Activated CD8-positive, alpha-beta T cell treated with anti-CD3 and anti-CD28 coated beads for 36 hours (primary cell): ENCODE measurements at regions of chr19 and their contacts with region 1.

Region 1: DNA sequence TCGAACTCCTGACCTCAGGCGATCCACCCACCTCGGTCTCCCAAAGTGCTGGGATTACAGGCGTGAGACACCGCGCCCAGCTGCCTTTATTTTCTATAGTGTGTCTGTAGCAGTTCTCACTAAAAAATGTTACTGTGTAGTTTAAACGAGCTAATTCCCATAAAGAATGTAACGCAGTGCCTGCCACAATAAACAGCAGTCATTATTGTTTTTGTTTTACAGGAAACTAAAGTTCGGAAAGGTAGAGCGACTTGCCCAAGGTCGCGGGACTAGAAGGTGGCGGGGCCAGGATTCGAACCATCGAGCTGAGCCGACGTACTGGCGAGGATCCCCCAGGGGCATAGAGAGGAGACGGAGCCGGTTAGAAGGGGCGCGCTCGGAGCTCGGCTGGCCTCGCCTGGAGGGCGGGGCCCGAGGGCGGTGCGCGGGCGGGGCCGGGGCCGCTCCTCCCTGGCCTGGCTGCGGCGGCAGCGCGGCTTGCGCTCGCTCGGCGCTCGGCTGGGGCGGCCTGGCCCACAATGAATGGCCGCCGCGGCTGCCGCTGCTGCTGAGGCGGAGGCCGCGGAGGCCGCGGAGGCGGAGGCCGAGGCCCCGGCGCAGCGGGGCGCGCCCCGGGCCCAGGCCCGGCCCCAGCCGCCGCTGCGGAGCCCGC is at the start of gene NACC1:
- DNase-seq: peak; percentile 92
- ATAC-seq: peak; percentile 84
- H3K4me3 Mint-ChIP-seq: peak within 1 kb of the TSS; percentile 86
- H3K27ac Mint-ChIP-seq: peak within 1 kb of the TSS; percentile 95
- H3K4me1 Mint-ChIP-seq: peaks cover 52% of the 10 kb centered on the region
- H3K27me3 Mint-ChIP-seq: no peaks in the 10 kb centered on the region
- CTCF ChIP-seq: no peak
- total RNA-seq, gene NACC1: 73.8 to 87.5 TPM

Region 2: DNA sequence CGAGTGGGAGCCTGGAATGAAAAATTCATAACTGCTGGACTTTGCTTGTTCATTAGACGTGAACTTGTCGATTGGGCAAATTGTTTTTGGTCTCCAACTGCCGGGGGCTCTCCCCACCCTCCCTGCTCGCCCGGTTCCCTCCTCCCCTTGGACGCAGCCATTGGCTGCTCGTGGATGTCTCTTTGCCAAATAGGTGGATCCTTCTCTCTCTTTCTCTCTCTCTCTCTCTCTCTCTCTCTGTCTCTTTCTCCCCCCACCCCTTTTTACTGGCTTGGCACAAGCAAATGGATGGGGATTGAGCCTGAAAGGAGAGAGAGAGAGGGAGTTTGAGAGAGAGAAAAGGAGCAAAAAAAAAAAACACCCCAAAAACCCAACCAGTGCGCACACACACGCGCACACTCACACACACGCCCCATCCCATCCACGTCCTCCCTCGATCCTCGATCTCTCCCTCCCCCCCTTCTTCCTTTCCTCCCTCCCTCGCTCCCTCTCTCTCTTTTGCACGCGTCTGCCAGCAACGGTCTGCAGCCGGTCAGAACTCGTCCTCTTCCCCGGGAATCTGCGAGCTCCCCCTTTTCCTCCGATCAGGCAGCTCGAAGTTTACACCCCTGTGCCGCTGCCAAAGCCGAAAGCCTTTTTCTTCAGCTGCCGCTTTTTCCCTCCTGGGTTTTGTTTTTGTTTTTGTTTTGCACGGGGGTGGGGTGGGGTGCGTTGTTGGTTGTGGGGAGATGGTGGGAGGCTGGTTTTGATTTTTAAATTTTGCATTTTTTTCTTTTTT is 94.8 kb before region 1 on chr19:
- CTCF ChIA-PET with region 1: no interaction called
- POLR2A ChIA-PET with region 1: no interaction called
- intact Hi-C with region 1: no loop called
- DNase-seq: peak; percentile 29
- ATAC-seq: peak; percentile 63
- H3K4me3 Mint-ChIP-seq: peak overlapping the region; percentile 64
- H3K27ac Mint-ChIP-seq: peak overlapping the region; percentile 12
- H3K4me1 Mint-ChIP-seq: peaks cover 18% of the 10 kb centered on the region
- H3K27me3 Mint-ChIP-seq: peaks cover 21% of the 10 kb centered on the region
- CTCF ChIP-seq: no peak

Region 3: DNA sequence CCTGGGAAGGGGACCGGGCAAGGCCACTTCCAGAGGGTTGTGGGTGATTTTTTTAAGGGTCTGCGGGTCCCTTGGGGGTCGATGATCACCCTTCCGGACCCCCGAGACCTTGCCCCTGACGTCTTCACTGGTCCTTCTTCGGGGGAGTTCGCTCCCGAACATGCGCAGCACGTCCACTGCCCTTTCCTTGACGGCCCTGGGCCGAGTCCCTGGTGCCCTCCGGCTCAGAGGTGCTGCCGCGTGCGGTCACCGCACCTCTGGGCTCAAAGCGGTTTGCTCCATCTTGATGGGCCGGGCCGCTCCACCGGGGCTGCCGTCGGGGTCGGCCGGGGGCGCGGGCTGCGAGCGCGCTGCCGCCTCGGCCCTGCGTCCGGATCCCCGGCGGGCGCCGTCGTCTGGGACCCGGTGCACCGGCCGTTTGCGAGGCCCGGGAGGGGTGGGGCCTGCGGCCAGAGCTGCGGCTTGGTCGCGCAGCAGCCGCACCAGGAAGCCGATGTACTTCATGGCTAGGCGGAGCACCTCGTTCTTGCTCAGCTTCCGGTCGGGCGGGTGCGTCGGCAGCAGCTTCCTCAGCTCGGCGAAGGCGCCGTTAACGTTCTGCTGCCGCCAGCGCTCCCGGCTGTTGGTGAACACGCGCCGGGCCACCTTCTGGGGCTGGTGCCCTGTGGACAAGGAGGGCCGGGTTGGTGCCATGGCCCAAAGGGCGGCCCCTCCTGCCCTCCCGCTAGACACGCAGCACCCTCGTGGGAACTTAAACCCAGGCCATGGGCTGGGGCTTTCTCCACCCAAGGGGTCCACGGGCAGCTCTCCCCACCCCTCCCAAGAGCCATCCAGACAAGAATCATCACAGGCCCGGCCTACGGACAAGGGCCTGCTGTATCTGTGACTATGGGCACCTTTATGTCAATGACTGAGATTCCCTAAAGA is 18.6 kb before region 1 on chr19:
- CTCF ChIA-PET with region 1: interaction called, 39 read pairs
- POLR2A ChIA-PET with region 1: interaction called, 46 read pairs
- intact Hi-C with region 1: no loop called
- DNase-seq: peak; percentile 86
- ATAC-seq: peak; percentile 50
- H3K4me3 Mint-ChIP-seq: peak overlapping the region; percentile 61
- H3K27ac Mint-ChIP-seq: peak overlapping the region; percentile 88
- H3K4me1 Mint-ChIP-seq: peaks cover 53% of the 10 kb centered on the region
- H3K27me3 Mint-ChIP-seq: peaks cover 30% of the 10 kb centered on the region
- CTCF ChIP-seq: no peak

Region 4: DNA sequence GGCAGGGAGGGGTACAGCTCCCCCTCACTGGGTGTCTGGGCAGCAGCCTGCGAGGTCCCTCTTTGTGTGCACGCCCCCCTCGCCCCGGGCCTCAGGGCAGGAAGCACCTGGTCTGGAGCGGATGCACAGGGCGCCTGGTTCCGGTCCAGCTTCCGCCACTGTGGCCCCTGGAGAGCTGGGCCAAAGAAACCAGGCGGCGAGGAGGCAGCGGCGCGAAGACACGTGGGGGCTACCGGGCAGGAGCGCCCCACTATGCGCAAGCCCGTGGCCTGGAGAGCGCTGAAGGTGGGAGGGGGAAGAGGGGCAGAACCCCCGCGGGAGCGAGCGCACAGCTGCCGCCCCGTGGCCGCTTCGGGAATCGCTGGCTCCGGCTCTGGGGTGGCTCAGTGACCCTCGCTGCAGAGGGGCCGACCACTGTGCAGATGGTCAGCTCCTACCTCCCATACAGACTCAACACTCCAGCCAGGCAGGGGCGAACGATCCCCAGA is 13.5 kb before region 1 on chr19:
- CTCF ChIA-PET with region 1: interaction called, 39 read pairs
- POLR2A ChIA-PET with region 1: interaction called, 46 read pairs
- intact Hi-C with region 1: no loop called
- DNase-seq: peak; percentile 74
- ATAC-seq: peak; percentile 63
- H3K4me3 Mint-ChIP-seq: peak overlapping the region; percentile 80
- H3K27ac Mint-ChIP-seq: peak overlapping the region; percentile 86
- H3K4me1 Mint-ChIP-seq: peaks cover 28% of the 10 kb centered on the region
- H3K27me3 Mint-ChIP-seq: no peaks in the 10 kb centered on the region
- CTCF ChIP-seq: peak; percentile 98

Region 5: GRCh38 chr19:13132471-13133180 is 14.7 kb after region 1 on chr19:
- CTCF ChIA-PET with region 1: no interaction called
- POLR2A ChIA-PET with region 1: interaction called, 63 read pairs
- intact Hi-C with region 1: no loop called
- DNase-seq: peak; percentile 79
- ATAC-seq: peak; percentile 96
- H3K4me3 Mint-ChIP-seq: peak overlapping the region; percentile 14
- H3K27ac Mint-ChIP-seq: peak overlapping the region; percentile 84
- H3K4me1 Mint-ChIP-seq: peaks cover 41% of the 10 kb centered on the region
- H3K27me3 Mint-ChIP-seq: no peaks in the 10 kb centered on the region
- CTCF ChIP-seq: no peak

Region 6: GRCh38 chr19:13241231-13242104 is 123.6 kb after region 1 on chr19:
- CTCF ChIA-PET with region 1: no interaction called
- POLR2A ChIA-PET with region 1: no interaction called
- intact Hi-C with region 1: no loop called
- DNase-seq: peak; percentile 73
- ATAC-seq: peak; percentile 81
- H3K4me3 Mint-ChIP-seq: peak overlapping the region; percentile 29
- H3K27ac Mint-ChIP-seq: peak overlapping the region; percentile 51
- H3K4me1 Mint-ChIP-seq: peaks cover 17% of the 10 kb centered on the region
- H3K27me3 Mint-ChIP-seq: no peaks in the 10 kb centered on the region
- CTCF ChIP-seq: no peak